ENCODE measurements at regions of chr6 and their contacts with region 1.

Region 1: GRCh38 chr6:110039364-110039980 is 61.4 kb downstream of the GPR6 start:
- DNase-seq: peak; percentile 74 to 93 (median 88)
- ATAC-seq: peak; percentile 97
- H3K4me3 ChIP-seq: peak overlapping the region in 1 of 2 donors; percentile 35
- H3K27ac ChIP-seq: peak overlapping the region in 1 of 2 donors; percentile 68
- H3K4me1 ChIP-seq: peaks cover 3 to 13% of the 10 kb centered on the region in 2 donors
- H3K27me3 ChIP-seq: no peaks in the 10 kb centered on the region
- CTCF ChIP-seq: peak; percentile 74 to 93

Region 2: GRCh38 chr6:109705258-109705657 is 334.2 kb before region 1 on chr6:
- intact Hi-C with region 1: loop called in 1 of 2 experiments (anchors 5 kb)
- DNase-seq: peak; percentile 77 to 90 (median 84)
- ATAC-seq: peak; percentile 99
- H3K4me3 ChIP-seq: no peak overlapping the region
- H3K27ac ChIP-seq: no peak overlapping the region
- H3K4me1 ChIP-seq: peaks cover 0 to 55% of the 10 kb centered on the region in 2 donors
- H3K27me3 ChIP-seq: no peaks in the 10 kb centered on the region
- CTCF ChIP-seq: peak; percentile 88 to 94

Region 3: DNA sequence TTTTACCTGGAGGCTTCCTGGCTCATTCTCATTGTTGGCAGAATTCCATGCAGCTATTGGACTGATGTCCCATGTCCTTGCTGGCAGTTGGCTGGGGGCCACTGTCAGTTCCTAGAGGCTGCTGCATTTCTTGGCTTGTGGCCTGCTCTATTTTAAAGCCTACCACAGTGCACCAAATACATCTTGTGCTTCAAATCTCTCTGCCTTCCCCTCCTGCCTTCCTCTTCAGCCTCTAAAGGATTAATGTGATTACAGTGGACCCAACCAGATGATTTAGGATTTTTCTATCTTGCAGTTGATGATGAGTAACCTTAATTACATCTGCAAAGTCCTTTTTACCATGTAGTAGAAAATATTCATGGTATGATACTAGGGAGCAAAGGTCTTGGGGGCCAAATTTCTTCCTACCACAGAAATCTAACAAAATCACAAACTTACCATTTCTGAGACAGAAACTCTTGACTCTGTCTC is 266.5 kb before region 1 on chr6:
- intact Hi-C with region 1: no loop called
- DNase-seq: peak in 1 of 4 donors; percentile 35
- ATAC-seq: no peak
- H3K4me3 ChIP-seq: no peak overlapping the region
- H3K27ac ChIP-seq: peak overlapping the region in 1 of 2 donors; percentile 92
- H3K4me1 ChIP-seq: peaks cover 0 to 24% of the 10 kb centered on the region in 2 donors
- H3K27me3 ChIP-seq: no peaks in the 10 kb centered on the region
- CTCF ChIP-seq: no peak

Region 4: DNA sequence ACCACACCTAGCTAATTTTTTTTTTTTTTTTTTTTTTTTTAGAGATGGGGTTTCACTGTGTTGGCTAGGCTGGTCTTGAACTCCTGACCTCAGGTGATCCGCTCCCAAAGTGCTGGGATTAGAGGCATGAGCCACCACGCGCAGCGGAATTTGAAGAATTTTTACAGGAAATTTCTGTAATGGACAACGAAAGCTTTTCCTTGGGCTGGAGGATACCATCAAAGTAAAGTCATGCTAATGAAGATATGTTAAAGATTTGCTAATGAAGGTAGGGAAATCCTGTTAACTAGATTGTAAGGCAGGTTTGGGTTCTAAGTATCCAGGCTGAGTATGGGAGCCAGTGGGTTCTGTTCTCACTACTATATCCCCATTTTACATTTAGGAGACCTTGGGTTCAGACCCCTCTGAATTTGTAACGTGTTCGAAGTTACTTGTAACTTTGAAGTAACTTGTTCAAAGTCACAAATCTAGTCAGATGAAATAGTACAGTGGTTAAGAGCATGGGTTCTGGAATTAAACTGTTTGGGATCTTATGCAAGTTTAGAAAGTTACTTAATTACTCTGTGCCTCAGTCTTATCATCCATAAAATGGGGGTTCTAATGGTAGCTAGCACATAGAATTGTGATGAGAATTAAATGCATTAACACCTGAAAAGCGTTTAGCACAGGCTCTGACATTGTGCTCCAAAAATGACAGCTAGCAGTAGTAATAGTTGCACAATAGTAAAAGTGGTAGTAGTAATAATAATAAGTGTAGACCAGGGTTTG is 184.7 kb before region 1 on chr6:
- intact Hi-C with region 1: no loop called
- DNase-seq: no peak
- ATAC-seq: no peak
- H3K4me3 ChIP-seq: no peak overlapping the region
- H3K27ac ChIP-seq: no peak overlapping the region
- H3K4me1 ChIP-seq: no peaks in the 10 kb centered on the region
- H3K27me3 ChIP-seq: no peaks in the 10 kb centered on the region
- CTCF ChIP-seq: no peak

Region 5: DNA sequence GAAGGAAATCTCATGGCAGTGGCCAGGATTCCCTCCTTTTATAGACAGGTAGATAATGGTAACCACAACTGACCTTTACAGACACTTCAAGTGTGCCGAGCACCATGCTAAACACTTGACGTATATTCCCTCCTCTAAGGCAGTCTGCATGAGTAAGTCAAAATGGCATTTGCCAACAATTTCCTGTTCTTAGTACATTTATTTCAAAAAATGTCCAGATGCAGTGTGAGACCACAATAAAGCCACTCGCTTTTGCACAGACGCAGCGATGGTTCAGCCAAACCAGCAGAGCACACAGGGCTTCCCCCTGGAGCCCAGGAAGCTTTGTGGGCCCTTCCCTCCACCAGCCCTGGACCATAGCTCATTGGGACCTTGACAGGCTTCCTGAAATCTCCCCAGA is 77.8 kb before region 1 on chr6:
- intact Hi-C with region 1: no loop called
- DNase-seq: no peak
- ATAC-seq: no peak
- H3K4me3 ChIP-seq: no peak overlapping the region
- H3K27ac ChIP-seq: no peak overlapping the region
- H3K4me1 ChIP-seq: no peaks in the 10 kb centered on the region
- H3K27me3 ChIP-seq: no peaks in the 10 kb centered on the region
- CTCF ChIP-seq: no peak

Measured in left lung (tissue), 14 donors.